ENCODE measurements at regions of chr7 and their contacts with region 1.

Region 1: DNA sequence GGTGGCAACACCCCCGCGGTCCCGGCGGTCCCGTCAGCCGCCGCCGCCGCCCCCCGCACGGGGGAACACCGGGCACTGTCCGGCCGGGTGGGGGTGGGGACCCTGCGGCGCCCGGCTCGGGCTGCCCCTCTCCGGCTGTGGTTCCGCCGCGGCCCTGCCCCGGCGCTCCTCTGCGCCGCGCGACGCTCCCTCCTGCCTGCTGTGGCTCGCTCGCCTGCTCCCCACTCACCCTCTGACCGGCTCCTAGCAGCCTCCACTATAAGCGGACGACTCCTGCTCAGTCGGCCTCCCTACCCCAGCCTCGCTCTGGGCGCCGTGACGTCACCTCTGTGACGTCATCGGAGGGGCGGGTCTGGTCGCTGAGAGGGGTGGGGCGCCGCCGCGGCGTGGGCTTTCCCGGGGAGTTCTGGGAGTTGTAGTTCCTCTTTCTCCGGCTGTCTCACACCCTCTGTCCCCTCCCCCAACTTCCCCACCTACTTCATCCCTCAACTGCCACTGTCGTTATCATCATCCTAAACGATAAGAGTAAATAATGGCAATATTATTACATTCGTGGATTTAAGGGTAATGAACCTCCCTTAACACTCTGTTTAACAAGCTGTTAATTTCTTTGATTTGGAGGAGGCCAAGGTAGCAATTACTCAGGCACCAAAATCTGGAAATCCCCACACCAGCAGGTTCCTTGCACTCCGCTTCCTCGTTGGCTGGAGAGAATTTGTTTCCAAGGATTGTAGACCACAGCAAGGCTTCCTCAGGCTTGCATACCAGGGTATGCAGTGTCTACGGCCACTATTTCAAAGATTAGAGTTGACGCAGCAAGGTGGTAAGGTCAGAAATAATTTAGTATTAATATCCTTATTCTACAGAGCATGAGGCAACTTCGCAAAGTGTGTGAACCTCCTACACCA is at the start of gene UBE2H:
- DNase-seq: peak; percentile 78 to 91 (median 86)
- ATAC-seq: peak; percentile 90
- H3K4me3 ChIP-seq: peak within 1 kb of the TSS; percentile 80
- H3K4me3 Mint-ChIP-seq: peak within 1 kb of the TSS in 8 of 10 donors; percentile 2 to 100 (median 98)
- H3K27ac ChIP-seq: peak within 1 kb of the TSS; percentile 99
- H3K27ac Mint-ChIP-seq: peak within 1 kb of the TSS in 6 of 9 donors; percentile 98 to 100 (median 99)
- H3K4me1 ChIP-seq: peaks cover 14 to 28% of the 10 kb centered on the region in 2 donors
- H3K4me1 Mint-ChIP-seq: peaks cover 0 to 13% (median 6%) of the 10 kb centered on the region in 7 donors
- H3K27me3 ChIP-seq: no peaks in the 10 kb centered on the region
- H3K27me3 Mint-ChIP-seq: peaks cover 0 to 9% (median 0%) of the 10 kb centered on the region in 5 donors
- total RNA-seq, gene UBE2H: 32.0 to 69.2 (median 49.1) TPM

Region 2: DNA sequence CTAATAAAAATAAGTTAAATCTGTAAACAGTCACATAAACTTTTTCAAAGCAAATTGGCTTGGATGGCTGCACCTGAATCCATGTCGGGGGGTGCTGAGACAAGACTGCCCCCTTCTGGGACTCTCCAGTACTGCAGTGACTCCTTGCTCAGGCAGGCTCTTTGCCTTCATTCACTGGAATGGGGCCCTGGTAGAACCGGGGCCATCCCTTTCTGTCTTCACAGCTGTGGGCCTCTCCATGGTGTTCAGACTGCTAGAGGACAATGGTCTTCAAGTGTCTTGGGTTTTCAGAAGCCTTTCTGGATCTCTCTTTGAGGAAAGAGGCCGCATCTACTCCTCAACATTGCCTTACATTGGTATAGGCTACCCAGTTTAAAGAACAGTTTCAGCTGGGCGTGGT is 1527.1 kb before region 1 on chr7:
- CTCF ChIA-PET with region 1: no interaction called
- POLR2A ChIA-PET with region 1: no interaction called
- intact Hi-C with region 1: no loop called
- DNase-seq: peak; percentile 59 to 85 (median 73)
- ATAC-seq: peak; percentile 90
- H3K4me3 ChIP-seq: no peak overlapping the region
- H3K4me3 Mint-ChIP-seq: no peak overlapping the region
- H3K27ac ChIP-seq: no peak overlapping the region
- H3K27ac Mint-ChIP-seq: no peak overlapping the region
- H3K4me1 ChIP-seq: peaks cover 0 to 2% of the 10 kb centered on the region in 2 donors
- H3K4me1 Mint-ChIP-seq: peaks cover 0 to 16% (median 0%) of the 10 kb centered on the region in 7 donors
- H3K27me3 ChIP-seq: no peaks in the 10 kb centered on the region
- H3K27me3 Mint-ChIP-seq: peaks cover 0 to 8% (median 5%) of the 10 kb centered on the region in 5 donors

Region 3: DNA sequence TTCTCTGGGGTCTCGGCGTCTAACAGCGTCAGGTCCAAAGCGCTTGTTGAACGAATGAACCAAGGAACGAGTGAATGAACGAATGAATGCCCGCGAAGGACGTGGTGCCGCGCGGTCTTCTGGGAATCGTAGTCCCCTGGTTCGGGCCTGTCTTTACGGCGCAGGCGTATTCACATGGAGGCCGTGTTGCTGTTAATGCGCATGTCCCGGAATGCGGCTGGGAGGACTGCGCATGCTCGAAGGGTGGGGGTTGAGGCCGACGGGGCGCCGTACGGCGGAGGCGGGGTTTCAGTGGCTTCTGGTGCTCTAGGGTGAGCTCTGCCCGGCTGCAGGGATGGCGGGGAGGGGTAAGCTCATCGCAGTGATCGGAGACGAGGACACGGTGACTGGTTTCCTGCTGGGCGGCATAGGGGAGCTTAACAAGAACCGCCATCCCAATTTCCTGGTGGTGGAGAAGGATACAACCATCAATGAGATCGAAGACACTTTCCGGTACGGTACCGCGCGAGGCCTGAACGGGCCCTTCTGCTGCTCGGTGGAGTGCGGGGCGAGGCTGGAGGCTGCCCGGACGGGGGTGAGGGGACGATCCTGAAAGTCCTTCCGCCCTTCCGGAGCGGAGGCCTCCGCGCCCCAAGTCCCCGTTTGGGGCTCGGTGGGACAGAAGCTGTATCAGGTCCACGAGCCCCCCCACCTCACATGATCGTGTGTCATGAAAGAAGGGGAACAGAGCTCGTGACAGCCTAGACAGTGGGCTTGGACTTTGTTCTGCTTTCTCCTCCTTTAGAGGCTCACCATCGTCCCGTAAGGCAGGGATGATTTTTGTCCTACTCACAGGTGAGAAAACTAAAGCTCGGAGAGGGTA is 1090.1 kb before region 1 on chr7 and contains the start of gene ATP6V1F:
- CTCF ChIA-PET with region 1: no interaction called
- POLR2A ChIA-PET with region 1: no interaction called
- intact Hi-C with region 1: loop called in 1 of 2 experiments (anchors 2 kb)
- DNase-seq: peak; percentile 97 to 100 (median 99)
- ATAC-seq: peak; percentile 93
- H3K4me3 ChIP-seq: peak within 1 kb of the TSS; percentile 88
- H3K4me3 Mint-ChIP-seq: peak within 1 kb of the TSS; percentile 88 to 100 (median 98)
- H3K27ac ChIP-seq: peak within 1 kb of the TSS; percentile 76
- H3K27ac Mint-ChIP-seq: peak within 1 kb of the TSS; percentile 86 to 99 (median 93)
- H3K4me1 ChIP-seq: peaks cover 12 to 15% of the 10 kb centered on the region in 2 donors
- H3K4me1 Mint-ChIP-seq: peaks cover 21 to 38% (median 33%) of the 10 kb centered on the region in 7 donors
- H3K27me3 ChIP-seq: no peaks in the 10 kb centered on the region
- H3K27me3 Mint-ChIP-seq: peaks cover 0 to 3% (median 0%) of the 10 kb centered on the region in 5 donors
- total RNA-seq, gene ATP6V1F: 58.4 to 116 (median 79.1) TPM

Region 4: DNA sequence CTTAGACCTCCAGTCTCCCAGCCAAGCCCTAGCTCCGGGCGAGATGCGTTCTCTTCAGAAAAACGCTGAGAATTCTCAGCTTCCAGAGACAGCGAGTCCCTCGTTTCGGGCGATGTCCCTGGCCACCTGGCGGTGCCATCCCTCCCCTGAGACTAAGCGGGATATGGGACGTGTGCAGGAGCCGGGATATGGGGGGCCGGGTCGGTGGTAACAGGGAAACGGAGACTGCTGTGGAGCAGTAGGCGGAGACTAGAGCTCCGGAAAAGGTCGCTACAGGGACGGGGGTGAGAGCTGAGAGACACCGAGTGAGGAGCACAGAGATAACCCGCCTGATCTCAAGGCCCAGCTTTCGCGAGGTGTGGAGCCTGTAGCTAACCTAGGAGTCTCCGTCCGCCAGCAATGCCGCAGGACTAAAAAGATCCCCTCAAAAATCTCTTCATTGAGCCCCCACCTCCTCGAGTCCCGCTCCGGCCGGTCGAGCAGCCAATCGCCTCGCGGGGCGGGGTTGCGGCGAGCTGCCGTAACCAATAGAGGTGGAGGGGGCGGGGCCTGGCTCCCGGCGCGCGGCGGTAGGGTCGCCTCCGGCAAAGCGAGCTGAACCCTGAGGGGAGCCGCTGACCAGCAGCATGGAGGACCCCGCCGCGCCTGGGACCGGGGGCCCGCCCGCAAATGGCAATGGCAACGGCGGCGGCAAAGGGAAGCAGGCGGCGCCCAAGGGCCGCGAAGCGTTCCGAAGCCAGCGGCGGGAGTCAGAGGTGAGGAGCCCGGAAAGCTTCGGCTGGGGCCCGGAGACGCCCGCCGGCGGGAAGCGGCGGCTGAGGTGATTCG is 518.8 kb before region 1 on chr7 and contains the start of gene STRIP2:
- CTCF ChIA-PET with region 1: no interaction called
- POLR2A ChIA-PET with region 1: no interaction called
- intact Hi-C with region 1: loop called (anchors 5 kb)
- DNase-seq: peak; percentile 77 to 97 (median 86)
- ATAC-seq: peak; percentile 98
- H3K4me3 ChIP-seq: peak within 1 kb of the TSS; percentile 85
- H3K4me3 Mint-ChIP-seq: peak within 1 kb of the TSS; percentile 90 to 98 (median 93)
- H3K27ac ChIP-seq: peak within 1 kb of the TSS; percentile 52
- H3K27ac Mint-ChIP-seq: peak within 1 kb of the TSS; percentile 11 to 91 (median 69)
- H3K4me1 ChIP-seq: peaks cover 6 to 14% of the 10 kb centered on the region in 2 donors
- H3K4me1 Mint-ChIP-seq: peaks cover 9 to 43% (median 17%) of the 10 kb centered on the region in 7 donors
- H3K27me3 ChIP-seq: peaks cover 4 to 6% of the 10 kb centered on the region in 2 donors
- H3K27me3 Mint-ChIP-seq: peaks cover 8 to 34% (median 29%) of the 10 kb centered on the region in 5 donors
- total RNA-seq, gene STRIP2: 0.14 to 21.4 (median 0.27) TPM in 4 of 5 experiments, not detected in the other

Region 5: GRCh38 chr7:129780257-129780973 is 172.5 kb before region 1 on chr7:
- CTCF ChIA-PET with region 1: no interaction called
- POLR2A ChIA-PET with region 1: no interaction called
- intact Hi-C with region 1: loop called in 1 of 2 experiments (anchors 5 kb)
- DNase-seq: peak in 6 of 9 donors; percentile 23 to 71 (median 38)
- ATAC-seq: peak; percentile 81
- H3K4me3 ChIP-seq: peak overlapping the region; percentile 47
- H3K4me3 Mint-ChIP-seq: peak overlapping the region; percentile 44 to 91 (median 77)
- H3K27ac ChIP-seq: no peak overlapping the region
- H3K27ac Mint-ChIP-seq: no peak overlapping the region
- H3K4me1 ChIP-seq: peaks cover 21 to 51% of the 10 kb centered on the region in 2 donors
- H3K4me1 Mint-ChIP-seq: peaks cover 24 to 42% (median 36%) of the 10 kb centered on the region in 7 donors
- H3K27me3 ChIP-seq: peaks cover 25 to 53% of the 10 kb centered on the region in 2 donors
- H3K27me3 Mint-ChIP-seq: peaks cover 39 to 78% (median 48%) of the 10 kb centered on the region in 5 donors

Region 6: GRCh38 chr7:130010689-130011412 is 57.9 kb after region 1 on chr7:
- CTCF ChIA-PET with region 1: interaction called, 3 read pairs
- POLR2A ChIA-PET with region 1: no interaction called
- intact Hi-C with region 1: loop called (anchors 2 to 5 kb)
- DNase-seq: peak; percentile 71 to 88 (median 81)
- ATAC-seq: peak; percentile 88
- H3K4me3 ChIP-seq: no peak overlapping the region
- H3K4me3 Mint-ChIP-seq: no peak overlapping the region
- H3K27ac ChIP-seq: no peak overlapping the region
- H3K27ac Mint-ChIP-seq: peak overlapping the region in 2 of 9 donors; percentile 81 to 88
- H3K4me1 ChIP-seq: no peaks in the 10 kb centered on the region
- H3K4me1 Mint-ChIP-seq: peaks cover 0 to 9% (median 1%) of the 10 kb centered on the region in 7 donors
- H3K27me3 ChIP-seq: no peaks in the 10 kb centered on the region
- H3K27me3 Mint-ChIP-seq: no peaks in the 10 kb centered on the region

Region 7: GRCh38 chr7:130668257-130669084 is 715.6 kb after region 1 on chr7 and contains the start of gene COPG2:
- CTCF ChIA-PET with region 1: no interaction called
- POLR2A ChIA-PET with region 1: no interaction called
- intact Hi-C with region 1: loop called (anchors 2 to 5 kb)
- DNase-seq: peak; percentile 26 to 90 (median 46)
- ATAC-seq: peak; percentile 93
- H3K4me3 ChIP-seq: peak within 1 kb of the TSS; percentile 64
- H3K4me3 Mint-ChIP-seq: peak within 1 kb of the TSS; percentile 85 to 95 (median 90)
- H3K27ac ChIP-seq: peak within 1 kb of the TSS; percentile 73
- H3K27ac Mint-ChIP-seq: peak within 1 kb of the TSS; percentile 38 to 93 (median 81)
- H3K4me1 ChIP-seq: no peaks in the 10 kb centered on the region
- H3K4me1 Mint-ChIP-seq: peaks cover 6 to 23% (median 21%) of the 10 kb centered on the region in 7 donors
- H3K27me3 ChIP-seq: no peaks in the 10 kb centered on the region
- H3K27me3 Mint-ChIP-seq: peaks cover 0 to 11% (median 0%) of the 10 kb centered on the region in 5 donors
- total RNA-seq, gene COPG2: 8.1 to 12.4 (median 9.4) TPM

Region 8: GRCh38 chr7:131327626-131328376 is 1374.9 kb after region 1 on chr7 and contains the start of gene MKLN1:
- CTCF ChIA-PET with region 1: no interaction called
- POLR2A ChIA-PET with region 1: no interaction called
- intact Hi-C with region 1: loop called in 1 of 2 experiments (anchors 5 kb)
- DNase-seq: peak; percentile 82 to 91 (median 86)
- ATAC-seq: peak; percentile 99
- H3K4me3 ChIP-seq: peak within 1 kb of the TSS; percentile 88
- H3K4me3 Mint-ChIP-seq: peak within 1 kb of the TSS; percentile 88 to 100 (median 94)
- H3K27ac ChIP-seq: peak within 1 kb of the TSS; percentile 94
- H3K27ac Mint-ChIP-seq: peak within 1 kb of the TSS; percentile 86 to 99 (median 97)
- H3K4me1 ChIP-seq: peaks cover 26 to 43% of the 10 kb centered on the region in 2 donors
- H3K4me1 Mint-ChIP-seq: peaks cover 35 to 85% (median 71%) of the 10 kb centered on the region in 7 donors
- H3K27me3 ChIP-seq: no peaks in the 10 kb centered on the region
- H3K27me3 Mint-ChIP-seq: no peaks in the 10 kb centered on the region
- total RNA-seq, gene MKLN1: 42.0 to 69.8 (median 59.3) TPM

Measured in naive thymus-derived CD4-positive, alpha-beta T cell (primary cell).